ENCODE measurements at regions of chr5 and their contacts with region 1.

Region 1: GRCh38 chr5:132007399-132008165 is 3.9 kb downstream of the ACSL6 start:
- DNase-seq: peak; percentile 83 to 84
- H3K4me3 ChIP-seq: no peak overlapping the region
- H3K4me3 Mint-ChIP-seq: no peak overlapping the region
- H3K27ac Mint-ChIP-seq: no peak overlapping the region
- H3K4me1 ChIP-seq: 0 out of 2 replicates have a peak, but pooled peaks cover 3% of the 10 kb centered on the region
- H3K4me1 Mint-ChIP-seq: peaks cover 3% of the 10 kb centered on the region
- H3K27me3 ChIP-seq: no peaks in the 10 kb centered on the region
- H3K27me3 Mint-ChIP-seq: peaks cover 3% of the 10 kb centered on the region
- CTCF ChIP-seq: peak; percentile 82

Region 2: DNA sequence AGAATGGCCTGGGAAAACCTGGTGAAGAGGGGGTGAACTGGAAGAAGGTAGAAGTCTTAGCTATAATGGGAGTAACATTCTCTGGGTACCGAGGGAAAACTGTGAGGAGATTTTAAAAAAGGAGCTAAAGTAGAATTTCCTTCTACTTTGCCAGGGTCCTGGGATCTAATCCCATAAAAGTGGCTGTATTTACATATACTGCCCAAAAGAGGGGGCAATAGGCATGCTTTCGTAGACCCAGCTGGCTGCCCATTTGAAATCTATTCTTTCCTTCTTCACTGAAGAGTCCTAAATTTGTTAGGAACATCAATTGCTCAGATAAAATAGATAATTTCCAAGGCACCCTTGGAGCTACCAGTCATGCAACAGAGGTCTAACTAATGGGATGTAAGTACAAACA is 584.5 kb before region 1 on chr5:
- CTCF ChIA-PET with region 1: interaction called, 3 read pairs
- POLR2A ChIA-PET with region 1: no interaction called
- intact Hi-C with region 1: loop called (anchors 10 kb)
- DNase-seq: peak in 1 of 2 experiments; percentile 19
- H3K4me3 ChIP-seq: no peak overlapping the region
- H3K4me3 Mint-ChIP-seq: no peak overlapping the region
- H3K27ac Mint-ChIP-seq: no peak overlapping the region
- H3K4me1 ChIP-seq: no peaks in the 10 kb centered on the region
- H3K4me1 Mint-ChIP-seq: no peaks in the 10 kb centered on the region
- H3K27me3 ChIP-seq: no peaks in the 10 kb centered on the region
- H3K27me3 Mint-ChIP-seq: no peaks in the 10 kb centered on the region
- CTCF ChIP-seq: peak; percentile 29 to 51

Region 3: DNA sequence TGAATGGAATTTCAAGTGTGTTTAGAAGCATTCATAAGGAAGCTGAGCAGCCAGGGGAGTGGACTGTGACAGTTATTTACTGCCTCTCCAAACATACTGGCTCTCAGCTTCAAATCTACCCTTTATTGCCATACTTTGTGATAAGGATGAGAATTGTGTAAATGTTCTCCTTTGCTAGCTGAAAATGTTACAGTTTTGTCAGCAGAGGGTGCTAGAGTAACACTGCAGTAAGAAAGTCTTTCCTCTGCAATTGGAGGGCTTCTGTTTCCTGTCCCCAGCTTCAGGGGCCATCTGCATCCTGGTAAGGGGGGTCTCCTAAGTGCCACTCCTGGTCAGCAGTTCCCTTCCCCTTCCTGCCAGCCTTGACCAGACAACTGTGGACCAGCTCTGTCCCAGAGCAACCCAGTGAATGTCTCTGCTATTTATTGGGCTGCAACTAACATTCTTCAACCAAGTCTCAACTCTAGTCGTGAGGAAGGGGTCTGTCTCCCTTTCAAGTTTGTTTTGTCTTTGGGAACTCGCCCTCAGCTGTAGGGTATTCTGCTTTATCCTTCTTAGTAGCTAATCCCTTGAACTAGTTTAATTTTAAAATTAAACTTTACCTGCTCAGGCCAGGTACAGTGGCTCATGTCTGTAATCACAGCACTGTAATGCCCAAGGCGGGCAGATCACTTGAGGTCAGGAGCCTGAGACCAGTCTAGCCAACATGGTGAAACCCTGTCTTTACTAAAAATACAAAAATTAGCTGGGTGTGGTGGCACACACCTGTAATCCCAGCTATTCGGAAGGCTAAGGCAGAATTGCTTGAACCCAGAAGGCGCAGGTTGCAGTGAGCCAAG is 417.9 kb before region 1 on chr5:
- CTCF ChIA-PET with region 1: interaction called, 33 read pairs
- POLR2A ChIA-PET with region 1: no interaction called
- intact Hi-C with region 1: loop called (anchors 1 kb)
- DNase-seq: peak; percentile 58 to 66
- H3K4me3 ChIP-seq: no peak overlapping the region
- H3K4me3 Mint-ChIP-seq: no peak overlapping the region
- H3K27ac Mint-ChIP-seq: peak overlapping the region; percentile 61
- H3K4me1 ChIP-seq: peaks cover 10% of the 10 kb centered on the region
- H3K4me1 Mint-ChIP-seq: peaks cover 18% of the 10 kb centered on the region
- H3K27me3 ChIP-seq: no peaks in the 10 kb centered on the region
- H3K27me3 Mint-ChIP-seq: no peaks in the 10 kb centered on the region
- CTCF ChIP-seq: peak; percentile 77 to 82

Region 4: GRCh38 chr5:131710391-131710790 is 297.2 kb before region 1 on chr5:
- CTCF ChIA-PET with region 1: no interaction called
- POLR2A ChIA-PET with region 1: no interaction called
- intact Hi-C with region 1: loop called (anchors 10 kb)
- DNase-seq: no peak
- H3K4me3 ChIP-seq: no peak overlapping the region
- H3K4me3 Mint-ChIP-seq: no peak overlapping the region
- H3K27ac Mint-ChIP-seq: no peak overlapping the region
- H3K4me1 ChIP-seq: no peaks in the 10 kb centered on the region
- H3K4me1 Mint-ChIP-seq: no peaks in the 10 kb centered on the region
- H3K27me3 ChIP-seq: no peaks in the 10 kb centered on the region
- H3K27me3 Mint-ChIP-seq: no peaks in the 10 kb centered on the region
- CTCF ChIP-seq: no peak

Region 5: DNA sequence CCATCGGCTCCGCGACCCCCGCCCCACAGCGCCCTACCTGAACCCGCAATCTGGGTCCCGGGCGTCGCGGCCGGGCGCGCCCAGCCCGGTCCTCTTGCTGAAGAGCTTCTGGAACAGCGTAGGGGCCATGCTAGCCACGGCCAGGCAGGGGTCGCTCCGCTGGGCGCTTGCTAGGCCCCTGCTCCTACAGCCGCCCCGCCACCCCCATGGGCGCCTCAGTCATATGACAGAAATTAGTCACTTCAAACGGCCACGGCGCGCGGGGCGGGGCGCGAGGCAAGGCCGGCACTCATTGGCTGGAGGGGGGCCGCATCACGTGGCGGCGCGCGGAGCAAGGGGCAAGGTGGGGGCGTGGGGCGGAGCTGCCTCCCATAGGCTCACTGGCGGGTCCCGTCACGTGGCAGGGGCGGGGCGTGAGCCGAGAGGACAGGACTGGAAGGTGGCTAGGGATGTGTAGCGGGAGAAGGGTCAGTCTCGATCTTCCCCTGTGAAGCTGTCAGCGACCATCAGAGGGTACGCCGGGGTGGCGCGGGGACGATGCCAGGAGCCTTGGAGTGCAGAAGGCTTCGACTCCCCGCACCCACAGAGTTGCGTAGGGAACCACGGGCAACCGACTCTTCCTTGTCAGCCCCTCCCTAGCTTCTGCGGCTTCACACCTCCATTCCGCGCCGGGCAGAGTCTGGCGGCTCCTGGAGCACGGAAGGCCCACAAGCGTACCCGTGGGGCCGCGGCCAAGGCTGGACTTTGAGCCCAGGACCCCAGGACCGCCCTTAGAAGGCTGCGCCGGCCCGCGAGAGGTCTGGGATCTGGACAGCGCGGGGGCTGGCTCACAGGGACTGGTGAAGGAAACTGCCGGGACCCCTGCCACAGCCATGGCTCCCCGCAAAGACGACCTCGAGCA is 210.5 kb before region 1 on chr5 and contains the start of gene FNIP1:
- CTCF ChIA-PET with region 1: interaction called, 10 read pairs
- POLR2A ChIA-PET with region 1: interaction called, 3 read pairs
- intact Hi-C with region 1: loop called (anchors 5 kb)
- DNase-seq: peak; percentile 100
- H3K4me3 ChIP-seq: peak within 1 kb of the TSS; percentile 94
- H3K4me3 Mint-ChIP-seq: peak within 1 kb of the TSS; percentile 95
- H3K27ac Mint-ChIP-seq: peak within 1 kb of the TSS; percentile 90
- H3K4me1 ChIP-seq: peaks cover 5% of the 10 kb centered on the region
- H3K4me1 Mint-ChIP-seq: peaks cover 7% of the 10 kb centered on the region
- H3K27me3 ChIP-seq: no peaks in the 10 kb centered on the region
- H3K27me3 Mint-ChIP-seq: peaks cover 6% of the 10 kb centered on the region
- CTCF ChIP-seq: peak in 1 of 2 experiments; percentile 30
- total RNA-seq, gene FNIP1: 42.7 and 45.0 TPM in 2 replicates

Region 6: GRCh38 chr5:131810510-131811249 is 196.9 kb before region 1 on chr5:
- CTCF ChIA-PET with region 1: interaction called, 25 read pairs
- POLR2A ChIA-PET with region 1: no interaction called
- intact Hi-C with region 1: loop called (anchors 1 kb)
- DNase-seq: peak in 1 of 2 experiments; percentile 19
- H3K4me3 ChIP-seq: no peak overlapping the region
- H3K4me3 Mint-ChIP-seq: no peak overlapping the region
- H3K27ac Mint-ChIP-seq: no peak overlapping the region
- H3K4me1 ChIP-seq: peaks cover 10% of the 10 kb centered on the region
- H3K4me1 Mint-ChIP-seq: no peaks in the 10 kb centered on the region
- H3K27me3 ChIP-seq: no peaks in the 10 kb centered on the region; the same call in 1 of the 2 replicates
- H3K27me3 Mint-ChIP-seq: peaks cover 5% of the 10 kb centered on the region
- CTCF ChIP-seq: peak; percentile 16 to 20

Region 7: DNA sequence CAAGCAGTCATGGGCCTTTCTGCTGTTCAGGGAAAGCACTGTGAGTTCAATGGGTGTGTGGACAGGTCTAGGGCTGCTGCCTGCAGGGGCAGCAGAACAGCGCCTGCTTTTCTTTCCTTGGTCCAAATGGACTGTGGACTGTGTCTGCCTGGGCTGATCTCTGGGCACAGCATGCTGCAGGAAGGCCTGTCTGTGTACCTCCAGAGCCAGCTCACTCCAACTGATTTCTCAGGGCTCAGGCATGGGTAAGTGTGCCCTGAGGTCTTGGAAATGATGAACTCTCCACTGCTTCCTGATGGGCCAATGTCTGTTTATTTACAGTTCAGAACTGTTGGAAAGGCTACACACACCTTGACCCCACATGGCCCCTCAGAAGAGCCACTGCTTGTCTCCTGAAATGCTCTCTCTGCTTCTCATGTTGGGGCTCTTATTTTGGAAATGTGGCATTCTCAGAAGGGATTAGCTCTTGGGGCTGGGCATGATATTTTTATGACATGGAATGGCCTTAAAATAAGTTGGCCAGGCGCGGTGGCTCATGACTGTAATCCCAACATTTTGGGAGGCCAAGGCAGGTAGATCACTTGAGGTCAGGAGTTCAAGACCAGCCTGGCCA is 313.6 kb after region 1 on chr5:
- CTCF ChIA-PET with region 1: no interaction called
- POLR2A ChIA-PET with region 1: no interaction called
- intact Hi-C with region 1: no loop called
- DNase-seq: no peak
- H3K4me3 ChIP-seq: no peak overlapping the region
- H3K4me3 Mint-ChIP-seq: no peak overlapping the region
- H3K27ac Mint-ChIP-seq: no peak overlapping the region
- H3K4me1 ChIP-seq: peaks cover 13% of the 10 kb centered on the region
- H3K4me1 Mint-ChIP-seq: peaks cover 13% of the 10 kb centered on the region
- H3K27me3 ChIP-seq: no peaks in the 10 kb centered on the region
- H3K27me3 Mint-ChIP-seq: no peaks in the 10 kb centered on the region
- CTCF ChIP-seq: no peak

Measured in Caco-2 (cell line).